Common myeloid progenitor, CD34-positive (primary cell): ENCODE measurements at regions of chr10 and their contacts with region 1.

Region 1: GRCh38 chr10:102503281-102504220 is at the start of gene SUFU:
- DNase-seq: peak; percentile 99 to 100 (median 99)
- H3K4me3 ChIP-seq: peak within 1 kb of the TSS; percentile 74 to 99 (median 96)
- H3K27ac ChIP-seq: peak within 1 kb of the TSS; percentile 25 to 93
- H3K4me1 ChIP-seq: peaks cover 20 to 51% (median 36%) of the 10 kb centered on the region in 4 experiments
- H3K27me3 ChIP-seq: no peaks in the 10 kb centered on the region

Region 2: GRCh38 chr10:102517553-102517952 is 14.0 kb after region 1 on chr10:
- CTCF ChIA-PET with region 1: interaction called, 17 read pairs
- POLR2A ChIA-PET with region 1: no interaction called
- DNase-seq: no peak
- H3K4me3 ChIP-seq: no peak overlapping the region
- H3K27ac ChIP-seq: no peak overlapping the region
- H3K4me1 ChIP-seq: no peaks in the 10 kb centered on the region
- H3K27me3 ChIP-seq: no peaks in the 10 kb centered on the region